MCF 10A (cell line): ENCODE measurements at regions of chr16 and their contacts with region 1.

Region 1: GRCh38 chr16:50024684-50025536 is at the start of gene CNEP1R1:
- DNase-seq: peak; percentile 96
- H3K4me3 Mint-ChIP-seq: peak within 1 kb of the TSS; percentile 91
- H3K27ac Mint-ChIP-seq: peak within 1 kb of the TSS; percentile 82
- H3K4me1 Mint-ChIP-seq: peaks cover 5% of the 10 kb centered on the region
- H3K27me3 Mint-ChIP-seq: peaks cover 17% of the 10 kb centered on the region
- CTCF ChIP-seq: peak; percentile 99
- total RNA-seq, gene CNEP1R1: 22.0 and 23.2 TPM in 2 replicates

Region 2: GRCh38 chr16:50011707-50012106 is 13.2 kb before region 1 on chr16:
- CTCF ChIA-PET with region 1: interaction called, 22 read pairs
- POLR2A ChIA-PET with region 1: no interaction called
- intact Hi-C with region 1: no loop called
- DNase-seq: peak; percentile 6
- H3K4me3 Mint-ChIP-seq: no peak overlapping the region
- H3K27ac Mint-ChIP-seq: no peak overlapping the region
- H3K4me1 Mint-ChIP-seq: peaks cover 10% of the 10 kb centered on the region
- H3K27me3 Mint-ChIP-seq: no peaks in the 10 kb centered on the region
- CTCF ChIP-seq: no peak

Region 3: DNA sequence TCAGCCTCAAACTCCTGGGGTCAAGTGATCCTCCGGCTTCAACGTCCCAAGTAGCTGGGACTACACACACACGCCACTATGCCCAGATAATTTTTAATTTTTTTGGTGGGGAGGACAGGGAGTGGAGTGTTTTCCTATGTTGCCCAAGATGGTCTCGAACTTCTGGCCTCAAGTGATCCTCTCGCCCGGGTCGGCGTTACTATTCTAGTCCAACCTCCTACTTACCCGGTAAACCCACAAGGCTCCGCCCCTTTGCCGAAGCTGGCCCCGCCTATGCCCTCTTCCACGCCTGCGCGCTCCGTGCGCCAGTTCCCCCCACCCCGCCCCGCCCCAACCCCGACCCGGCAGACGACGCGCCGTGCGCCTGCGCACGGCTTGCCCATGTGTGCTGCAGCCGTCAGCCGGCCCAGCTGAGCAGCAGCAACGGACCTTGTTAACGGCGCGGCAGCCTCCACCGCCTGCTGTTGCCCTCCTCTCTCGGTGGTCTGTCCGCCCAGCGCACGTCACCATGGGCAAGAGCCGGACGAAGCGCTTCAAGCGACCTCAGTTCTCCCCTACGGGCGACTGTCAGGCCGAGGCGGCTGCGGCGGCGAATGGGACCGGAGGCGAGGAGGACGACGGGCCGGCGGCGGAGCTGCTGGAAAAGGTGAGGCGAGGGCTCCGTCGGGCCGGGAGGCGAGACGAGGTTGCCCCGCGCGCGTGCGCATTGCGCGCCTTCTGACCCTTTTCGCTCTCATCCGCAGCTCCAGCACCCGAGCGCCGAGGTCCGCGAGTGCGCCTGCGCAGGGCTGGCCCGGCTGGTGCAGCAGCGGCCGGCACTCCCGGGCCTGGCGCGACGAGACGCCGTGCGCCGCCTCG is 40.9 kb after region 1 on chr16 and contains the start of gene HEATR3:
- CTCF ChIA-PET with region 1: interaction called, 46 read pairs
- POLR2A ChIA-PET with region 1: interaction called, 23 read pairs
- intact Hi-C with region 1: no loop called
- DNase-seq: peak; percentile 90
- H3K4me3 Mint-ChIP-seq: peak within 1 kb of the TSS; percentile 88
- H3K27ac Mint-ChIP-seq: peak within 1 kb of the TSS; percentile 52
- H3K4me1 Mint-ChIP-seq: peaks cover 23% of the 10 kb centered on the region
- H3K27me3 Mint-ChIP-seq: no peaks in the 10 kb centered on the region
- CTCF ChIP-seq: no peak
- total RNA-seq, gene HEATR3: 10.5 and 13.3 TPM in 2 replicates

Region 4: GRCh38 chr16:50210266-50211038 is 185.5 kb after region 1 on chr16:
- CTCF ChIA-PET with region 1: interaction called, 61 read pairs
- POLR2A ChIA-PET with region 1: interaction called, 18 read pairs
- intact Hi-C with region 1: loop called (anchors 1 kb)
- DNase-seq: peak; percentile 72
- H3K4me3 Mint-ChIP-seq: no peak overlapping the region
- H3K27ac Mint-ChIP-seq: peak overlapping the region; percentile 65
- H3K4me1 Mint-ChIP-seq: peaks cover 32% of the 10 kb centered on the region
- H3K27me3 Mint-ChIP-seq: no peaks in the 10 kb centered on the region
- CTCF ChIP-seq: peak; percentile 68